ENCODE measurements at regions of chr4 and their contacts with region 1.

Region 1: DNA sequence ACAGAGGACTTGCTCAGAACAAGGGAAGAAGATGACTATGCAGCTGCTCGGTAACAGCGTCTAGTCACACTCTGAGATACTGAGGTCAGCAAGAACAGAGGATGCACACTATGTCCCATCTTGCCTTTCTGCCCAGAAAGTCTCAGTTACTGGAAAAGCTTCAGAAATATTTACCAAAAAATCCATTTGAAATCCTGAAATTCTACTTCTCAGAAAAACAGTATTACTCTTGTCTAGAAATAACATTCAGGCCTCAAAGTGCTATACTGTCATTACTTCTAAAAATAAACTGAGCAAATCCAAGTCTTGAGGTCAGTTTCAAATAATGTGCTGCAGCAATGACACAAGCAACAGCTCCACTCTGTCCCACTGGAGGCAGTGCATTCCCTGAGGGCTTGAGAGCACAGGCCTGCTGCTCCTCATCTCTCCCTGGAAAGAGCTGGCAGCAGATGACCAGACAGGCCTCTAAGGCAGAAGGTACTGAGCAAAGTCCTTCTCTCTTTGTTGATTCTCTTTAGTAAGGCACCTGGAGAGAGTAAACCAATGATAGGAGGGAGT is 76.9 kb downstream of the CAMK2D start:
- DNase-seq: peak; percentile 67 to 85 (median 83)
- ATAC-seq: peak; percentile 92 to 97 (median 96)
- H3K4me3 ChIP-seq: no peak overlapping the region
- H3K27ac ChIP-seq: peak overlapping the region; percentile 33 to 90 (median 78)
- H3K4me1 ChIP-seq: peaks cover 7 to 64% (median 45%) of the 10 kb centered on the region in 12 donors
- H3K27me3 ChIP-seq: no peaks in the 10 kb centered on the region
- CTCF ChIP-seq: peak in 11 of 12 donors; percentile 22 to 61 (median 40)
- POLR2A ChIP-seq: no peak

Region 2: DNA sequence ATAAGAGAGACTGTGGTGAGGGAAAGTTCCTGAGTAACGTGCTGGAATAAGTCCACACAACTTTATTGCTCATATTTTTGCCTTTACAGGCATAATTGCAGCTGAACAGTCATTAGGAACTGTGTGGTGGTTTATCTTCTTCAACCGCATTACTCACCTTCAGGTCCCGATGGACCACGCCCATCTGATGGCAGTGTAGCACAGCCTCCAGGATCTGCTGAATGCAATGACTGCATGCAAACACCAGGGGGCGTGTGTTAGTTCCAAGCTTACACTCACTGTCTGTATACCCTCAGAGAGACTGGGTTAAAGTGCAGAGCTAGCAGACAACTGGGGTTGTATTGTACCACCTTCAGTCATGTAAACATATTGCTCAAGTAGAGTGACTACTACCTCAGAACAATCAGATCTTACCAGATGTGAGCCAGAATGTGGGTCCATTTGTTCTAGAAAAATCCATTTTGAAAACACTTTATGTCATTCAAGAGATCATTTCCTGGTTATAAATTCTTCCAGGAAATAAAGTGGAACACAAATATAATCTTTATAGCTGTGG is 137.0 kb before region 1 on chr4:
- intact Hi-C with region 1: loop called in 7 of 10 experiments (anchors 5 to 10 kb)
- DNase-seq: peak; percentile 83 to 90 (median 86)
- ATAC-seq: peak; percentile 94 to 99 (median 98)
- H3K4me3 ChIP-seq: no peak overlapping the region
- H3K27ac ChIP-seq: peak overlapping the region in 11 of 12 donors; percentile 23 to 75 (median 56)
- H3K4me1 ChIP-seq: peaks cover 0 to 19% (median 12%) of the 10 kb centered on the region in 12 donors
- H3K27me3 ChIP-seq: no peaks in the 10 kb centered on the region
- CTCF ChIP-seq: peak; percentile 91 to 99 (median 97)
- POLR2A ChIP-seq: no peak

Region 3: DNA sequence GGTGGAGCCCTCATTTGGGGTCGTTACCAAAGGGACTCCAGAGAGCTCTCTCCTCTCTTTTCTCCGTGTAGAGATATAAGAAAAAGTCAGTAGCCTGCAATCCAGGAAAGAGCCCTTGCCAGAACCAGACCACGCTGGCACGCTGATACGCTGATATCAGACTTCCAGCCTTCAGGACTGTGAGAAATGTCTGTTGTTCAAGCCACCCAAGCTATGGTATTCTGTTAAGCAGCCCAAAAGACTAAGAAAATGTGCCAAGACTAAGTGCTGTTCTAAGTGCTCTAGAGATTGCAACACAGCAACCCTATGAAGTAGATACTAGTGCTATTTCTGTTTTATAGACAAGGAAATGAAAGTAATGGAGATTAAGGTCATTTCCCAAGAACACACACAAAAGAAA is 128.7 kb before region 1 on chr4:
- intact Hi-C with region 1: loop called in 2 of 10 experiments (anchors 10 kb)
- DNase-seq: peak in 4 of 5 donors; percentile 25 to 68 (median 50)
- ATAC-seq: peak; percentile 83 to 96 (median 90)
- H3K4me3 ChIP-seq: peak overlapping the region in 4 of 12 donors; percentile 7 to 15 (median 10)
- H3K27ac ChIP-seq: peak overlapping the region; percentile 64 to 92 (median 81)
- H3K4me1 ChIP-seq: peaks cover 0 to 39% (median 24%) of the 10 kb centered on the region in 12 donors
- H3K27me3 ChIP-seq: no peaks in the 10 kb centered on the region
- CTCF ChIP-seq: no peak
- POLR2A ChIP-seq: no peak

Region 4: DNA sequence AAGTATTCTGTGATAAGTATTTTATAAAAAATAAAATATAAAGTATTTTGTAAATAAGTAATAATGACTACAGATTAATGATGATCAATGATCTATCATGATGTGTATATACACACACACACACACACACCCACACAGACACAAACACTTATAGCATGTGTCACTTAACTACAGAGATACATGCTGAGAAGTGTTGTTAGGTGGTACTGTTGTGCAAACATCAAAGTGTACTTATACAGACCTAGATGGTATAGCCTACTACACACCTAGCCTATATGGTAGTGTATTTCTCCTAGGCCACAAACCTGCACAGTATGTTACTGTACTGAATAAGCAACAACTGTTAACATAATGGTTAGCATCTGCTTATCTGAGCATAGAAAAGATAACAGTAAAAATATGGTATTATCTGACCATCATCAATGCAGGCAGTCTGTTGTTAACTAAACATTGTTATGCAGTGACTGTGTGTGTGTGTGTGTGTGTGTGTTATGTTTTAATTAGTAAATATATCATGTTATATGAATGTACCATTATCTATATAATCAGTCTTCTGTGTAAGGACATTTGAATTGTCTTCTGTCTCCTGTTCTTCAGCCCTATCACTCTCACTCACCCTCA is 61.2 kb before region 1 on chr4:
- intact Hi-C with region 1: no loop called
- DNase-seq: no peak
- ATAC-seq: no peak
- H3K4me3 ChIP-seq: no peak overlapping the region
- H3K27ac ChIP-seq: no peak overlapping the region
- H3K4me1 ChIP-seq: peaks cover 0 to 46% (median 18%) of the 10 kb centered on the region in 12 donors
- H3K27me3 ChIP-seq: no peaks in the 10 kb centered on the region
- CTCF ChIP-seq: no peak
- POLR2A ChIP-seq: no peak

Region 5: GRCh38 chr4:113645771-113646441 is 38.7 kb before region 1 on chr4:
- intact Hi-C with region 1: no loop called
- DNase-seq: no peak
- ATAC-seq: peak in 3 of 4 donors; percentile 57 to 61 (median 59)
- H3K4me3 ChIP-seq: no peak overlapping the region
- H3K27ac ChIP-seq: peak overlapping the region in 11 of 12 donors; percentile 2 to 59 (median 51)
- H3K4me1 ChIP-seq: peaks cover 3 to 60% (median 48%) of the 10 kb centered on the region in 12 donors
- H3K27me3 ChIP-seq: no peaks in the 10 kb centered on the region
- CTCF ChIP-seq: no peak
- POLR2A ChIP-seq: no peak

Region 6: DNA sequence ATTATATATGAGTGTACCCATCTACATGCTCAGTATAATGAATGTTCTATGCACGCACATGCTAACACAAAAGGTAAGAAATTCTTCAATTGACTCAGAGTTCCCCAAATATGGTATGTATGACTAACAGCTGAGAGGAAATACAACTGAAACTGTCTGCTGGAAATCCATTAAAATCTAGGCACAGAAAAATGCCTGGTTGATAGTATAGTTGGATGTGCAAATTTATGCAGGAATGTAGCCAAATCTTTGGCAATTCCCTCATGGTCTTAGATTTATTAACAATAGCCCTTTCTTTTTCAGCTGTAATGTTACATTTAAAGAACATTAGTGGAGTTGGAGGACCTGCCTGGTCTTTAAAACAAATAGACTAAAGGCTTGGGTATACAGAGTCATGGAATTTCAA is 71.4 kb after region 1 on chr4:
- intact Hi-C with region 1: loop called in 8 of 10 experiments (anchors 2 to 10 kb)
- DNase-seq: no peak
- ATAC-seq: no peak
- H3K4me3 ChIP-seq: no peak overlapping the region
- H3K27ac ChIP-seq: peak overlapping the region in 4 of 12 donors; percentile 5 to 39 (median 12)
- H3K4me1 ChIP-seq: peaks cover 3 to 69% (median 35%) of the 10 kb centered on the region in 12 donors
- H3K27me3 ChIP-seq: no peaks in the 10 kb centered on the region
- CTCF ChIP-seq: no peak
- POLR2A ChIP-seq: no peak